Kidney (tissue), 22 donors: ENCODE measurements at regions of chr14 and their contacts with region 1.

Region 1: DNA sequence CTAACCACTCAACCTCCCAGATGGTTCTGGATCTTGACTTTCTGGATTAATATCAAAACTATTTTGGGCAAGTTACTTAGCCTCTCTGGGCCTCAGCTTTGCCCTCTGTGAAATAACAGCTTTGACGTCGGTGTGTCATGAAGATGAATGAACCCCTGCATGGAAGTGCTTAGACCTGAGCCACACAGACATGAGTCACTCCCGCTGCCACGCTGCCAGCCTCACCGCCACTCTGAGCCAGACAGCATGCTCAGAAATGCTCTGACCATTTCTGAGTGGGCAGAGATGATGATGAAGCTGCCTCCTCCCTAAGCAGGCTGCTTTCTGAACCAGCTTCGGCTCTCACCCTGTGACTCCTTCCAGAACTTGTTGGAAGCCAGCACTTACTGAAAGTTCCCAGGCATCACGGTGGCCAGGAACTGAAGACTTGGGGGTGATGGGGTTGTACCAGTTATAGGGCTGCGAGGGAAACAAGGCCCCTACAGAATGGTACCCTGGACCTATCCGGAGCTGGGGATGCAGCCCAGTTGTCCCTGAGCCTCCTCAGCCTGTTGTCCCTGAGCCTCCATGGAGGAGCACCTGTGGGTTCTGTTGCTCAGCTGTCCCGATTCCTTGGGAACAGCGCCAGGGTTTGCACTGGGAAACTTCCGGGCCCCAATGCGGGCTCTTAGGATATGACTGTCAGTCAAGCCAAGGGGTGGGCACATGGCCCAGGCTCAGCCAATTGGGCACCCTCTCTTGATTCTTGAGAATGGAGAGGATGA is 2.0 kb upstream of the CCDC197 start:
- DNase-seq: no peak
- H3K4me3 ChIP-seq: no peak overlapping the region
- H3K27ac ChIP-seq: no peak overlapping the region
- H3K4me1 ChIP-seq: no peaks in the 10 kb centered on the region
- H3K27me3 ChIP-seq: no peaks in the 10 kb centered on the region
- CTCF ChIP-seq: no peak

Region 2: DNA sequence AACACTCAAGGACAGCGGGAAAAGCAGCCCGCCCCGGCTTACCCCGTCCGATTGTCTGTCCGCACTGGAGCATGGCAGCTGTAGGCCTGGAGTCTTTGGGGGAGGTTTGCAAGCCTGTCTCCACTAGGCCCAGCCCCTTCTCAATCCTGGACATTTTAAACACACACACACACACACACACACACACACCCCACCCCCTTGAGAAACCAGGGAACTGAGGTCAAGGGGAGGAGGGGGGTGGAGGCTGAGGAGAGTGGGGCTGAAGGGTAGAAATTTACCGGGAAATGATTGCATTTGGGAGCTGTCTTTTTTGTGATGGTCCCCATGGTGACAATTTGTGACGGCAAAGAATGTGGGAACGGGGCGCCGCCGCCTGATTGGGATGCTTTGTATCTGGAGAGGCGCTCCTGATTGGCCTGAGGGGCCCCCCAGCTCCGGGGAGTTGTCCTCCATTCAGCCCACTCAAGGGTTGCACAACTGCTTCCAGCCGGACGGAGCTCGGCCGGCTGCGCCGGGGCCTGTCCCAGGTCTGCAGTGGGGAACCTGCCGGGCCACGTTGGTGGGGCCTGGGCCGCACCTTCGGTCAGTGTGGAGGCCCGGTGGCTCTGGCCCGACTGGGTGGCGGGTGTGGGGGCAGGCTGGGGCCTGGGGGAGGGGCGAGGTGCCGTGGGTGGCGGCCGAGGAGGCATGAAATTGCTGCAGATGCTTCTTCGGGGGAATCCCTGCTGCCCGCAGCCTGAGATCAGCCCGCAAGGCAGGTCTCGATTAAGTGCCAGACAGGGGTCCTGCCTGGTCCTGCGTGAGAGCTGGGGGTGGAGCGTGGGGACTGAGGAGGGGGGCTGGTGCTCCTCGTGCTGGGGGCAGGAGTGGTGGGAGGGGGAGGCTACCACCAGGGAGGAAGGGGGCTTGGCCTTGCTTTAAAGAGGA is 68.0 kb before region 1 on chr14 and contains the start of gene FAM181A:
- intact Hi-C with region 1: no loop called
- DNase-seq: peak in 3 of 5 donors; percentile 9 to 75 (median 22)
- H3K4me3 ChIP-seq: no peak within 1 kb of the TSS
- H3K27ac ChIP-seq: no peak within 1 kb of the TSS
- H3K4me1 ChIP-seq: no peaks in the 10 kb centered on the region
- H3K27me3 ChIP-seq: no peaks in the 10 kb centered on the region
- CTCF ChIP-seq: no peak
- total RNA-seq, gene FAM181A: not detected

Region 3: DNA sequence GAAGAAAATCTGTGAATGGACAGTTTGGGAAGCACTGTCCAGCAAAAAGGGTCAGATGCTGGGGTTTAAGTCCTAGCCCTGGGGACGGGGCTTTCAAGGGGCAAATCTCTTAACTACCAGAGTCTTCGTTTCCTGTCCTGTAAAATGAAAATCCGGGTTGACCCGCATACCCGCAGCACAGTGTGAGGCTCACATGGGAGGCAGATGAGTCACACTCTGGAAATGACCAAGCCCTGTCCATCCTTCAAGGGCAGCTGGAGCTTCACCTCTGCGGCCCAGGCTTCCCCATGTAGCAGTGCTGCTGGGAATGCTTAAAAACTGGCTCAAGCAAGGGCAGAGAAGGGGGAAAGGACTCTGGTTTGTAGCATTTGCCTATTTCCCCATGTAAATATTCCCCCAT is 49.0 kb before region 1 on chr14:
- intact Hi-C with region 1: loop called (anchors 5 kb)
- DNase-seq: no peak
- H3K4me3 ChIP-seq: no peak overlapping the region
- H3K27ac ChIP-seq: no peak overlapping the region
- H3K4me1 ChIP-seq: no peaks in the 10 kb centered on the region
- H3K27me3 ChIP-seq: no peaks in the 10 kb centered on the region
- CTCF ChIP-seq: no peak